ENCODE measurements at regions of chr1 and their contacts with region 1.

Region 1: DNA sequence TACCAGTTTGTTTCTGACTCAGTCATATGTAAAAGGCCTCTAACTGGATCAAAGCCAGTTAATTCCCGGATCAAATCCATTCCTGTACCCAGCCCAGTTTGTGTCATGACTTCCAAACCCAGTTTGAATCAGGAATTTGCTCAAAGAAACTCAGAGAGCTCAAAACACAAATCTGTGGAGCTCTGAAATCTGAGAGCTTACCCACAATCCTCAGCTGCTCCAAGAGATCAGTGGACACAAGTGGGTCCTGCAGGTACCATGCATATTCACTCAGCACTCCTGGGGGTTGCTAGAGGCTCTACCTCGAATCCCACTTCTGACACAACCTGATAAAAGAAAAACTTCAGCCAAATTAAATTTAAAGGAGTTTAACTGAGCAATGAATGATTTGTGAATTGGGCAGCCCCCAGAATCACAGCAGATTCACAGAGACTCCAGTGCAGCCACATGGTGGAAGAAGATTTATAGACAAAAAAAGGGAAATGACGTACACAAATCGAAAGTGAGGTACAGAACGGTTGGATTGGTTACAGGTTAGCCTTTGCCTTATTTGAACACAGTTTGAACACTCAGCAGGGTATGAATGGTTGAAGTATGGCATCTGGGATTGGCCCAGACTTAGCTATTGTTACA is 11.9 kb upstream of the MRPL55 start:
- DNase-seq: no peak
- H3K4me3 ChIP-seq: no peak overlapping the region
- CTCF ChIP-seq: no peak

Region 2: GRCh38 chr1:227828786-227829185 is 292.2 kb before region 1 on chr1:
- CTCF ChIA-PET with region 1: no interaction called
- POLR2A ChIA-PET with region 1: no interaction called
- DNase-seq: no peak
- H3K4me3 ChIP-seq: no peak overlapping the region
- CTCF ChIP-seq: no peak

Region 3: GRCh38 chr1:228109073-228109961 is 11.7 kb before region 1 on chr1 and contains the start of gene MRPL55:
- CTCF ChIA-PET with region 1: interaction called, 11 read pairs
- POLR2A ChIA-PET with region 1: interaction called, 3 read pairs
- DNase-seq: no peak
- H3K4me3 ChIP-seq: peak within 1 kb of the TSS; percentile 99
- CTCF ChIP-seq: peak; percentile 22